ENCODE measurements at regions of chr19 and their contacts with region 1.

Region 1: GRCh38 chr19:9785367-9786331 is 17.1 kb upstream of the ZNF846 start:
- DNase-seq: peak; percentile 99
- H3K4me3 ChIP-seq: peak overlapping the region; percentile 63 to 73
- H3K27ac ChIP-seq: peak overlapping the region; percentile 99
- H3K4me1 ChIP-seq: no peaks in the 10 kb centered on the region
- H3K27me3 ChIP-seq: no peaks in the 10 kb centered on the region
- CTCF ChIP-seq: peak in 1 of 4 experiments; percentile 16
- POLR2A ChIP-seq: peak; percentile 94

Region 2: GRCh38 chr19:9621156-9622037 is 164.3 kb before region 1 on chr19 and contains the start of gene ZNF561:
- intact Hi-C with region 1: loop called (anchors 2 kb)
- DNase-seq: peak; percentile 76
- H3K4me3 ChIP-seq: peak within 1 kb of the TSS; percentile 61 to 71
- H3K27ac ChIP-seq: peak within 1 kb of the TSS; percentile 90 to 95
- H3K4me1 ChIP-seq: no peaks in the 10 kb centered on the region
- H3K27me3 ChIP-seq: no peaks in the 10 kb centered on the region
- CTCF ChIP-seq: no peak
- POLR2A ChIP-seq: peak; percentile 34
- total RNA-seq, gene ZNF561: 27.8 to 32.3 TPM

Region 3: GRCh38 chr19:9674663-9675357 is 110.8 kb before region 1 on chr19 and contains the start of gene ZNF562:
- intact Hi-C with region 1: loop called (anchors 10 kb)
- DNase-seq: peak; percentile 82
- H3K4me3 ChIP-seq: peak within 1 kb of the TSS; percentile 66 to 78
- H3K27ac ChIP-seq: peak within 1 kb of the TSS; percentile 96 to 97
- H3K4me1 ChIP-seq: no peaks in the 10 kb centered on the region
- H3K27me3 ChIP-seq: no peaks in the 10 kb centered on the region
- CTCF ChIP-seq: no peak
- POLR2A ChIP-seq: peak; percentile 33
- total RNA-seq, gene ZNF562: 30.0 to 34.9 TPM

Region 4: DNA sequence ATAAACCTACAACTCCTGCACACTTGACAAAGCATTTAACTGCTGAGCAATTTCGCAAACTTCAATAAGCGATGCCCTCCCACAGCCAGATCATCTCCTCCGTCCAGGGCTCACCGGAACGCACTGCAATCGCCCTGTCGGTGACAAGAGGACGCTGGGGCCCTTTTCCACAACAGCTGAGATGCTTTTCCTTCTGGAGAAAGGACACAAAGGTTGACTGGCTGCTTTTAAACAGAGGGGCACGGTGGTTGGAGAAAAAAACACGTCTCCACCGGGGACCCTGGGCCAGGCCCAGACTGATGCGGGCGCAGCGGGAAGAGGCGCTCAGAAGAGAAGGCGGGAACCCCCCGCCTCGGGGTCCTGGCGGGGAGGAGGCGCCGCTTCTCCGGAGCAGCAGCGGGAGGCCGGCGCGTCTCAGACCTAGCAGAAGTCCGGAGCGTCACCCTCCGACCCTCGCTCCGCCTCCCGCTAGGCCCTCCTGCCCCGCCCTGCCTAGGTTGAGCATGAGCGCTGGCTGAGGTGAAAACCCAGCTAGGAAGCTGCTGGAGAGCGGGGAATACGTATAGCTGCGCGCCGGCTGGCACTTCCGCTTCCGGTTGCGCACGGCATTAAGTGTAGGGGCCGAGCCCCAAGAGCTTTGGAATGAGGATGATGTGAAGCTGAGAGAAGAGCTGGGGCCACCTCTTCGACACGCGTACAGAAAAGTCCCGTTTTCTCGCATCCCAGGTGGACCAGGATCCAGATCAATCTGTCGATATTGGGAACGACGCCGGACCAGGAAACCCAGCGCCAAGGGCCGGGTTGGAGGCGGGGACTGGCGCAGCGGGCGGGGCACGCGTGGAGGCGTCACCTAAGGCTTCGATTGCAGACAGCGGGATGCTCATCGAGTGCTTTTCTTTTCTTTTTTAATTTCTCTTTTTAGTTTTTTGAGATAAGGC is 17.2 kb before region 1 on chr19 and contains the start of gene ZNF846:
- intact Hi-C with region 1: loop called (anchors 2 kb)
- DNase-seq: peak; percentile 94
- H3K4me3 ChIP-seq: peak within 1 kb of the TSS; percentile 45 to 63
- H3K27ac ChIP-seq: peak within 1 kb of the TSS; percentile 93 to 95
- H3K4me1 ChIP-seq: no peaks in the 10 kb centered on the region
- H3K27me3 ChIP-seq: no peaks in the 10 kb centered on the region
- CTCF ChIP-seq: peak in 1 of 4 experiments; percentile 14
- POLR2A ChIP-seq: peak; percentile 88
- total RNA-seq, gene ZNF846: 24.5 to 30.8 TPM